Posterior vena cava (tissue), 2 donors: ENCODE measurements at regions of chr5 and their contacts with region 1.

Region 1: DNA sequence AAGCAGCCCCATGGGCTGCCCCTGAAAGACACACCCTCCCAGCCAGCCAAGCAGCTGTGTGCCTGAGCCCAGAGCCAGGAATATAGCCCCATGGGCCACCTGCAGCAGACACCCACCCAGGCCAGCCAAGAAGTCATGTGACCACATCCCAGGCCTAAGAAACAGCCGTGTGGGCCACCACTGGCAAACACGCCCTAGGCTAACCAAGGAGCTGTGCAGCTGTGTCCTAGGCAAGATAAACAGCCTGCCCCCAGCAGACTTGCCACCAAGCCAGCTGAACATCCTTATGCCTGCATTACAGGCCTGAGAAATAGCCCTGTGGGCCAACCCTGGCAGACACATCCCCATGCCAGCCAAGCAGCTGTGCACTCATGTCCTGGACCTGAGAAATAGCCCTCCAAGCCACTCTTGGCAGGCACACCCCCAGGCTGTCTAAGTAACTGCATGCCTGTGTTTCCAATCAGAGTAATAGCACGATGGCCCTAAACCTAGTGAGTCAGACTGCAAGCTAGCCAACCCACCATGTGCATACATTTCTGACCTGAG is 143.0 kb downstream of the ADAMTS6 start:
- DNase-seq: peak; percentile 54

Region 2: GRCh38 chr5:65382582-65382981 is 43.9 kb after region 1 on chr5:
- intact Hi-C with region 1: loop called in 1 of 2 experiments (anchors 1 kb)
- DNase-seq: no peak